ENCODE measurements at regions of chr2 and their contacts with region 1.

Region 1: DNA sequence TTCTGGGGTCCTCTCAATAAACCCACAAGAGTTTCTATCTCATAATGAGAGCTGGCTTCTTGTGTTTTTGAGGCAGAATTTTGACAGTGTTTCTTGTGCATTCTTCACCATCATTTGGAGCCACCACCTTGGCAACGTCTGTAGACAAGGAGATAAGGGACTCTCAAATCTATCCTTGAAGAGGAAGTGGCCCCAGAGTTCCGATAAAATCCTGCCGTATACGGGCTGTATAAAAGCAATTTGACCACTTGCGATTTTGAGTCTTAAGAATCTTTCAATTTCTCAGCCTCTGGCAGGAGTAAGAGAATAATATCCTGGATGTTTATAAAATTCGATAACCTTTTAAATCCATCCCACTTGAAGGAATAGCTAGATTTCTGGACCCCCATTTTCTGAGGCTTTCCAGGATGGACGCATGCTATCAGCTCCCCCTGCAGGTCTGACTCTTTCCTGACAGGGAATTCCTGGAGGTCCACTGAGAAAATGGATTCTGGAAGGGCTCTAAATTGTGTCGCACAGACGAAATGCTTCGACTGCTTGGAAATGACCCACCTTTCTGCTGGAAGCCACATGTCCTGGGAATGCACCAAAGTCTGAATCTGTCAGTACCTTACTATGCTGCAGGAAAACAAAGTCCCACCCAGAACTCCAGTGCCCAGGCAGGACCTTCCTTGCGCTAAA is 54.1 kb downstream of the E2F6 start:
- DNase-seq: peak in 1 of 4 donors; percentile 76
- ATAC-seq: peak; percentile 90
- H3K4me3 ChIP-seq: peak overlapping the region; percentile 18 to 24
- H3K27ac ChIP-seq: no peak overlapping the region
- H3K4me1 ChIP-seq: peaks cover 0 to 11% of the 10 kb centered on the region in 2 donors
- H3K27me3 ChIP-seq: no peaks in the 10 kb centered on the region
- CTCF ChIP-seq: peak; percentile 61 to 82

Region 2: GRCh38 chr2:11129598-11130449 is 282.1 kb before region 1 on chr2:
- intact Hi-C with region 1: loop called in 1 of 2 experiments (anchors 10 kb)
- DNase-seq: peak; percentile 60 to 92 (median 80)
- ATAC-seq: peak; percentile 84
- H3K4me3 ChIP-seq: peak overlapping the region; percentile 28 to 29
- H3K27ac ChIP-seq: peak overlapping the region in 1 of 2 donors; percentile 9
- H3K4me1 ChIP-seq: peaks cover 8 to 39% of the 10 kb centered on the region in 2 donors
- H3K27me3 ChIP-seq: peaks cover 0 to 27% of the 10 kb centered on the region in 2 donors
- CTCF ChIP-seq: no peak

Region 3: GRCh38 chr2:11239666-11240462 is 172.0 kb before region 1 on chr2:
- intact Hi-C with region 1: loop called in 1 of 2 experiments (anchors 5 kb)
- DNase-seq: no peak
- ATAC-seq: no peak
- H3K4me3 ChIP-seq: no peak overlapping the region
- H3K27ac ChIP-seq: peak overlapping the region in 1 of 2 donors; percentile 15
- H3K4me1 ChIP-seq: peaks cover 0 to 9% of the 10 kb centered on the region in 2 donors
- H3K27me3 ChIP-seq: no peaks in the 10 kb centered on the region
- CTCF ChIP-seq: no peak

Region 4: DNA sequence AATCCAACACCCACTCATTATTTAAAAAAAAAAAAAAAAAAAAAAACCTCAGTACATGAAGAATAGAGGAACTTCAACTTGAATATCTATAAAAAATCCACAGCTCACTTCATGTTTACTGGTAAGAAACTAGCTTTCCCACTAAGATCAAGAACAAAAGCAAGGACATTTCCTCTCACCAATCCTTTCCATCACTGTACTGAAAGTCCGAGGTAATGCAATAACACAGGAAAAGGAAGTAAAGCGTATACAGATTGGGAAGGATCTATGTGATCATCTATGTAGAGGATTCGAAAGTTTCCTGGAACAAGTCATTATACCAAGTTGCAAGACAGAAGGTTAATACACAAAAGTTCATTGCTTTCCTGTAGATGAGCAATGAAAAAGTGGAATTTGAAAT is 130.7 kb before region 1 on chr2:
- intact Hi-C with region 1: no loop called
- DNase-seq: no peak
- ATAC-seq: no peak
- H3K4me3 ChIP-seq: no peak overlapping the region
- H3K27ac ChIP-seq: peak overlapping the region in 1 of 2 donors; percentile 24
- H3K4me1 ChIP-seq: peaks cover 0 to 10% of the 10 kb centered on the region in 2 donors
- H3K27me3 ChIP-seq: no peaks in the 10 kb centered on the region
- CTCF ChIP-seq: no peak

Measured in left lung (tissue), 14 donors.